ENCODE measurements at regions of chr13 and their contacts with region 1.

Region 1: GRCh38 chr13:99041788-99042187 is 63.9 kb upstream of the DOCK9 start:
- DNase-seq: no peak
- H3K4me3 ChIP-seq: no peak overlapping the region
- H3K4me3 Mint-ChIP-seq: peak overlapping the region in 1 of 2 donors; percentile 82
- H3K27ac ChIP-seq: no peak overlapping the region
- H3K27ac Mint-ChIP-seq: no peak overlapping the region
- H3K4me1 ChIP-seq: peaks cover 17% of the 10 kb centered on the region in 2 donors
- H3K4me1 Mint-ChIP-seq: peaks cover 17% of the 10 kb centered on the region
- H3K27me3 ChIP-seq: peaks cover 86 to 92% of the 10 kb centered on the region in 2 donors
- H3K27me3 Mint-ChIP-seq: peaks cover 82 to 97% (median 93%) of the 10 kb centered on the region in 3 donors
- CTCF ChIP-seq: no peak

Region 2: DNA sequence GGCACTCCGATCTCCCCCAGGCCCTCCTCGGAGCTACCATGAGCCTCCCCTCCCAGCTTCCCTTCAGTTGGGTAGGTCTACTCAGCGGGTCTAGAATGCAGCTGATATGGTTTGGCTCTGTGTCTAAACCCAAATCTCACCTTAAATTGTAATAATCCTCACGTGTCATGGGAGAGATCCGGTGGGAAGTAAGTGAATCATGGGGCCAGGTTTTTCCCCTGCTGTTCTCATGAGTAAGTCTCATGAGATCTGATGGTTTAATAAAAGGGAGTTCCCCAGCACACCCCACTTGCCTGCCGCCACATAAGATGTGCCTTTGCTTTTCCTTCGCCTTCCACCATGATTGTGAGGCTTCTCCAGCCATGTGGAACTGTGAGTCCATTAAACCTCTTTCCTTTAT is 49.4 kb before region 1 on chr13:
- intact Hi-C with region 1: no loop called
- DNase-seq: peak in 1 of 3 donors; percentile 10
- H3K4me3 ChIP-seq: no peak overlapping the region
- H3K4me3 Mint-ChIP-seq: no peak overlapping the region
- H3K27ac ChIP-seq: no peak overlapping the region
- H3K27ac Mint-ChIP-seq: no peak overlapping the region
- H3K4me1 ChIP-seq: no peaks in the 10 kb centered on the region
- H3K4me1 Mint-ChIP-seq: no peaks in the 10 kb centered on the region
- H3K27me3 ChIP-seq: peaks cover 3 to 13% of the 10 kb centered on the region in 2 donors
- H3K27me3 Mint-ChIP-seq: peaks cover 16 to 33% (median 27%) of the 10 kb centered on the region in 3 donors
- CTCF ChIP-seq: no peak

Region 3: DNA sequence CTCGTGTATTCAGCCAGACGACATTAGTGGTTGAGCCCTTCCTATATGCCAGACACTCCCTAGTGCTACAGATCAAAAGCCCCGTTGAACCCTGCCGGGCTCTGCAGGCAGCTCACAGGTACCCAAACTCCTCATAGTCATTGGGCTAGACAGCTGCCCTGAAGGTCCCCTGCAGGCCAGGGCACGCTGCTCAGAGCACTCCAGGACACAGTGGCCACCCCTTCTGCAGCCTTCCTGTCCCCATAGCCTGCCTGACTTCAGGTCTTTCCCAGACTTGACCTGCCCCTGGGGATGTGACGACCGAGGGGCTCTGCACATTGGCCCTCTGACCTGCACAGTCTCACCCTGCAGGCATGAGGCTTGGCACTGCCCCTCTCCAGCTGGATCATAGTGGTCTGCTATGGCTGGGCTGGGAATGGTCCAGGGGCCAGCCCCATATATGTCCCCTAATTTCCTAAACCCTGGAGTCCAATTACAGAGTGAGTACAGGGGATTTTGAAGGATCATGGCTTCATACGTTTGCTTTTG is 94.7 kb after region 1 on chr13:
- intact Hi-C with region 1: no loop called
- DNase-seq: no peak
- H3K4me3 ChIP-seq: no peak overlapping the region
- H3K4me3 Mint-ChIP-seq: peak overlapping the region in 1 of 2 donors; percentile 72
- H3K27ac ChIP-seq: no peak overlapping the region
- H3K27ac Mint-ChIP-seq: peak overlapping the region in 1 of 7 donors; percentile 23
- H3K4me1 ChIP-seq: no peaks in the 10 kb centered on the region
- H3K4me1 Mint-ChIP-seq: no peaks in the 10 kb centered on the region
- H3K27me3 ChIP-seq: peaks cover 97 to 100% of the 10 kb centered on the region in 2 donors
- H3K27me3 Mint-ChIP-seq: peaks cover 99 to 100% (median 100%) of the 10 kb centered on the region in 3 donors
- CTCF ChIP-seq: no peak

Region 4: DNA sequence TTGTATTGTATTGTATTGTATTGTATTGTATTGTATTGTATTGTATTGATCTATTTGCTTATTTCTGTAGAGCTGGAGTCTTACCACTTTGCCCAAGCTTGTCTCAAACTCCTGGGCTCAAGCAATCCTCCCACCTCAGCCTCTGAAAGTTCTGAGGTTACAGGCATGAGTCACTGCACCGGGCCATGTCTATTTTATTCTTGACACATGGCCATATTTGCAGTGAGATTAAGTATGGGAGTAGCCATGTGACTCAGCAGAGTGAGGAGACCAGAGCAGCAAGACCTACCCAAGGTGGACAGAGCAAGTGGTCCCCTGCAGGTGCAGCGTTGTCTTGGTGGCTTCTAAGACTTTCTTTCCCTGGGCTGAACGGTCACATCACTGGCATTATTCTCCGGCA is 109.7 kb after region 1 on chr13:
- intact Hi-C with region 1: loop called in 1 of 2 experiments (anchors 10 kb)
- DNase-seq: peak in 1 of 3 donors; percentile 19
- H3K4me3 ChIP-seq: no peak overlapping the region
- H3K4me3 Mint-ChIP-seq: peak overlapping the region in 1 of 2 donors; percentile 89
- H3K27ac ChIP-seq: no peak overlapping the region
- H3K27ac Mint-ChIP-seq: no peak overlapping the region
- H3K4me1 ChIP-seq: peaks cover 9 to 10% of the 10 kb centered on the region in 2 donors
- H3K4me1 Mint-ChIP-seq: peaks cover 12% of the 10 kb centered on the region
- H3K27me3 ChIP-seq: peaks cover 92 to 100% of the 10 kb centered on the region in 2 donors
- H3K27me3 Mint-ChIP-seq: peaks cover 96 to 99% (median 98%) of the 10 kb centered on the region in 3 donors
- CTCF ChIP-seq: no peak